IMR-90 (cell line): ENCODE measurements at regions of chr9 and their contacts with region 1.

Region 1: GRCh38 chr9:115013998-115014397 is 83.6 kb upstream of the TNFSF8 start:
- DNase-seq: peak; percentile 82
- ATAC-seq: peak; percentile 45
- H3K4me3 ChIP-seq: no peak overlapping the region
- H3K27ac ChIP-seq: no peak overlapping the region
- H3K4me1 ChIP-seq: peaks cover 10% of the 10 kb centered on the region
- H3K27me3 ChIP-seq: peaks cover 5% of the 10 kb centered on the region
- CTCF ChIP-seq: peak; percentile 91
- POLR2A ChIP-seq: peak; percentile 53; the same call in 1 of the 2 replicates
- RAD21 ChIP-seq: peak; percentile 98

Region 2: GRCh38 chr9:114413861-114414301 is 600.1 kb before region 1 on chr9:
- CTCF ChIA-PET with region 1: no interaction called
- POLR2A ChIA-PET with region 1: no interaction called
- dilution Hi-C with region 1: no loop called
- in situ Hi-C with region 1: loop called (anchors 10 kb)
- intact Hi-C with region 1: no loop called
- DNase-seq: peak; percentile 88
- ATAC-seq: peak; percentile 64
- H3K4me3 ChIP-seq: no peak overlapping the region
- H3K27ac ChIP-seq: no peak overlapping the region
- H3K4me1 ChIP-seq: peaks cover 15% of the 10 kb centered on the region; the same call in 1 of the 2 replicates
- H3K27me3 ChIP-seq: peaks cover 12% of the 10 kb centered on the region
- CTCF ChIP-seq: no peak
- POLR2A ChIP-seq: no peak
- RAD21 ChIP-seq: no peak

Region 3: GRCh38 chr9:114487607-114488300 is 526.2 kb before region 1 on chr9:
- CTCF ChIA-PET with region 1: no interaction called
- POLR2A ChIA-PET with region 1: no interaction called
- dilution Hi-C with region 1: no loop called
- in situ Hi-C with region 1: loop called (anchors 10 kb)
- intact Hi-C with region 1: no loop called
- DNase-seq: peak; percentile 69
- ATAC-seq: peak; percentile 98
- H3K4me3 ChIP-seq: no peak overlapping the region
- H3K27ac ChIP-seq: no peak overlapping the region
- H3K4me1 ChIP-seq: peaks cover 4% of the 10 kb centered on the region
- H3K27me3 ChIP-seq: peaks cover 1% of the 10 kb centered on the region; the same call in 1 of the 2 replicates
- CTCF ChIP-seq: peak; percentile 86
- POLR2A ChIP-seq: 0 out of 2 replicates have a peak, but pooled peaks have one; percentile 35
- RAD21 ChIP-seq: peak; percentile 87

Region 4: GRCh38 chr9:114681594-114682332 is 332.2 kb before region 1 on chr9 and contains the start of gene TEX48:
- CTCF ChIA-PET with region 1: interaction called, 6 read pairs
- POLR2A ChIA-PET with region 1: no interaction called
- dilution Hi-C with region 1: no loop called
- in situ Hi-C with region 1: no loop called
- intact Hi-C with region 1: loop called (anchors 1 kb)
- DNase-seq: peak; percentile 74
- ATAC-seq: peak; percentile 58
- H3K4me3 ChIP-seq: no peak within 1 kb of the TSS
- H3K27ac ChIP-seq: no peak within 1 kb of the TSS
- H3K4me1 ChIP-seq: peaks cover 9% of the 10 kb centered on the region
- H3K27me3 ChIP-seq: no peaks in the 10 kb centered on the region
- CTCF ChIP-seq: peak; percentile 70
- POLR2A ChIP-seq: no peak
- RAD21 ChIP-seq: peak; percentile 75
- total RNA-seq, gene TEX48: not detected in 2 replicates

Region 5: GRCh38 chr9:114906908-114907571 is 107.0 kb before region 1 on chr9:
- CTCF ChIA-PET with region 1: interaction called, 7 read pairs
- POLR2A ChIA-PET with region 1: no interaction called
- dilution Hi-C with region 1: no loop called
- in situ Hi-C with region 1: loop called (anchors 5 kb)
- intact Hi-C with region 1: loop called (anchors 1 kb)
- DNase-seq: peak; percentile 61
- ATAC-seq: peak; percentile 76
- H3K4me3 ChIP-seq: no peak overlapping the region
- H3K27ac ChIP-seq: no peak overlapping the region
- H3K4me1 ChIP-seq: peaks cover 20% of the 10 kb centered on the region
- H3K27me3 ChIP-seq: no peaks in the 10 kb centered on the region; the same call in 1 of the 2 replicates
- CTCF ChIP-seq: peak; percentile 87
- POLR2A ChIP-seq: no peak
- RAD21 ChIP-seq: peak; percentile 89

Region 6: GRCh38 chr9:115250621-115251032 is 236.6 kb after region 1 on chr9:
- CTCF ChIA-PET with region 1: no interaction called
- POLR2A ChIA-PET with region 1: no interaction called
- dilution Hi-C with region 1: no loop called
- in situ Hi-C with region 1: no loop called
- intact Hi-C with region 1: loop called (anchors 5 kb)
- DNase-seq: peak; percentile 98
- ATAC-seq: peak; percentile 92
- H3K4me3 ChIP-seq: no peak overlapping the region
- H3K27ac ChIP-seq: no peak overlapping the region
- H3K4me1 ChIP-seq: peaks cover 9% of the 10 kb centered on the region
- H3K27me3 ChIP-seq: no peaks in the 10 kb centered on the region
- CTCF ChIP-seq: no peak; the same call in 1 of the 2 replicates
- POLR2A ChIP-seq: no peak
- RAD21 ChIP-seq: no peak; the same call in 1 of the 2 replicates